ENCODE measurements at regions of chr4 and their contacts with region 1.

Region 1: DNA sequence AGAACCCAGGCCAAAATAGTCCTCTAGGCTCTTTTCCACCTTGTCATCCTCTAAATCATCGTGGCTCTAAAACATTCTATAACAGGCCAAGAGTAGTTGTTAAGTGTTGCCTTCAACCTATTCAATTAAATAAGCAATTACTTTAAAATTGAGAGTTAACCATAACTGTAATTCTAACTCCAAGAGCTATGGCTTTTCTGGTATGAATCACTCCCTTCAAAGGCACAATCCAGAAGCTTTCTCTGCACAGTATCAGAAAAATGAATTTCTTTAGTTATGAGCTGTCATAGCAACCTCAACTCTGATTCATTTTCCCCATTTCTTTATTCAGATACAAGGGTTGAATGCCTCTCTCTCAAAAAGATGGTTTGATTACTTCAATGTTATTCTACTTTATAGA is 21.7 kb downstream of the INPP4B start:
- DNase-seq: no peak
- H3K4me3 Mint-ChIP-seq: no peak overlapping the region
- H3K27ac Mint-ChIP-seq: peak overlapping the region; percentile 52
- H3K4me1 Mint-ChIP-seq: peaks cover 9% of the 10 kb centered on the region
- H3K27me3 Mint-ChIP-seq: no peaks in the 10 kb centered on the region

Region 2: DNA sequence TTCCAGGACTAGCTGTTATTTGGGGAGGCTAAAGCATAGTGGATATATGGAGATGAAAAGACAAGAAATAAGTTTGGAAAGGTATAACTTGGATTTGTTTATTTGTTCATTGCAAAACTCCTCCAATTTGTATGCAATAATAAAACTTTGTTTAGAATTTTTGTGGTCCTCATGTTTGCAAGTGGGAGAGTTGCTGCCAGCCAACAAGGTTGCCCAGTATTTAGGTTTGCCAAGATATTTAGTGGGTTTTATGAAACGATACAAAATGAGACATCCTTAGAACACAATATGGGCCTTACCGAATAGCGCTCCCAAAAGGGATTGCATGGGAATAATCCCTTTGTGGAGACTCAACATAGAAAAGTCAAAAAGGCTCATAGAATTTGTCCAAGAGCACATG is 140.4 kb before region 1 on chr4:
- intact Hi-C with region 1: no loop called
- DNase-seq: no peak
- H3K4me3 Mint-ChIP-seq: no peak overlapping the region
- H3K27ac Mint-ChIP-seq: no peak overlapping the region
- H3K4me1 Mint-ChIP-seq: peaks cover 15% of the 10 kb centered on the region
- H3K27me3 Mint-ChIP-seq: no peaks in the 10 kb centered on the region

Region 3: GRCh38 chr4:142696334-142697122 is 127.8 kb before region 1 on chr4:
- intact Hi-C with region 1: loop called (anchors 5 kb)
- DNase-seq: no peak
- H3K4me3 Mint-ChIP-seq: no peak overlapping the region
- H3K27ac Mint-ChIP-seq: peak overlapping the region; percentile 86
- H3K4me1 Mint-ChIP-seq: peaks cover 58% of the 10 kb centered on the region
- H3K27me3 Mint-ChIP-seq: no peaks in the 10 kb centered on the region

Measured in activated T-helper 2 cell treated with anti-CD3 and anti-CD28 coated beads, Interferon-gamma antibody, Interleukin-2, Interleukin-4, amounts not matched to agents 10 μg/mL and 5 μg/mL and 100 μg/mL, durations not matched to agents 14 hours and 24 hours and 36 hours (primary cell).